Mammary epithelial cell (primary cell): ENCODE measurements at regions of chr12 and their contacts with region 1.

Region 1: DNA sequence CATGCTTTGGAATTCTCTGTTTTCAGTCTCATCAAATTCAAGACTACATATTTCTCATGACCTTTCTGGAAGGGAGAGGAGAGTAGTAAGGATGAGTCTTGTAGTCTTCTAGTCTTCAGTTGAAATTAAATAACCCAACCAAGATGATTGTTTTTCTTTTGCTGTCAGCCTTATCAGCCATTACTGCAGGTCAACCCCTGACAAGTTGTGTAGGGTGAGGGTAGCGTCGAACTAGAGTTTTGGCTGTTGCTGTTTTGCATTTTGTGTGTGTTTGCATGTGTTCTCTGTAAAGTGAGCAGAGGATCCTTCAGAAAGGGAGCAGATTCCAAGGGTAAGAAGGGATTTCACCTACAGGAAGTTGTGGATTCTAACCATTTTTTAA is 28.4 kb downstream of the DIP2B start:
- DNase-seq: no peak
- H3K4me3 ChIP-seq: no peak overlapping the region
- H3K27ac ChIP-seq: peak overlapping the region; percentile 98
- H3K4me1 ChIP-seq: peaks cover 53% of the 10 kb centered on the region
- H3K27me3 ChIP-seq: no peaks in the 10 kb centered on the region
- CTCF ChIP-seq: no peak

Region 2: GRCh38 chr12:50442178-50442908 is 90.9 kb before region 1 on chr12:
- CTCF ChIA-PET with region 1: interaction called, 13 read pairs
- dilution Hi-C with region 1: no loop called
- in situ Hi-C with region 1: no loop called
- intact Hi-C with region 1: no loop called
- DNase-seq: peak; percentile 43
- H3K4me3 ChIP-seq: no peak overlapping the region
- H3K27ac ChIP-seq: peak overlapping the region; percentile 59
- H3K4me1 ChIP-seq: no peaks in the 10 kb centered on the region
- H3K27me3 ChIP-seq: no peaks in the 10 kb centered on the region
- CTCF ChIP-seq: no peak

Region 3: DNA sequence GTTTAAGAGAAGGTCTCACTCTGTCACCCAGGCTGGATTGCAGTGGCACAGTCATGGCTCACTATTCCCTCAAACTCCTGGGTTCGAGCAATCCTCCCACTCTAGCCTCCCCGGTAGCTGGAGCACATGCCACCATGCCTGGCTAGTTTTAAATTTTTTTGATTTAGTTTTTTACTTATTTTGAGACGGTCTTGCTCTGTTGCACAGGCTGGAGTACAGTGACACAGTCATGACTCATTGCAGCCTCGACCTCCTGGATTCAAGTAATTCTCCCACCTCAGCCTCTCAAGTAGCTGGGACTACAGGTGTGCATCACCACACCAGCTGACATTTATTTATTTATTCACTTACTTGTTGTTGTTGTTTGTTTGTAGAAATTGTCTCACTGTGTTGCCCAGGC is 50.6 kb before region 1 on chr12:
- CTCF ChIA-PET with region 1: no interaction called
- dilution Hi-C with region 1: no loop called
- in situ Hi-C with region 1: no loop called
- intact Hi-C with region 1: no loop called
- DNase-seq: peak; percentile 22
- H3K4me3 ChIP-seq: no peak overlapping the region
- H3K27ac ChIP-seq: no peak overlapping the region
- H3K4me1 ChIP-seq: no peaks in the 10 kb centered on the region
- H3K27me3 ChIP-seq: no peaks in the 10 kb centered on the region
- CTCF ChIP-seq: no peak